ENCODE measurements at regions of chr11 and their contacts with region 1.

Region 1: GRCh38 chr11:12841946-12842630 is 167.0 kb upstream of the RASSF10 start:
- DNase-seq: peak in 3 of 4 experiments; percentile 32 to 75 (median 43)
- ATAC-seq: peak; percentile 55
- H3K4me3 ChIP-seq: no peak overlapping the region
- H3K27ac ChIP-seq: peak overlapping the region; percentile 76; the same call in 2 of the 3 replicates
- H3K4me1 ChIP-seq: peaks cover 10 to 63% of the 10 kb centered on the region in 2 experiments; a peak in 4 of 5 replicates
- H3K27me3 ChIP-seq: no peaks in the 10 kb centered on the region
- CTCF ChIP-seq: no peak
- EP300 ChIP-seq: 0 out of 2 replicates have a peak, but pooled peaks have one; percentile 32
- POLR2A ChIP-seq: no peak
- RAD21 ChIP-seq: 0 out of 4 replicates have a peak, but pooled peaks of 1 of the 2 experiments have one; percentile 8

Region 2: GRCh38 chr11:12827929-12828812 is 13.9 kb before region 1 on chr11:
- CTCF ChIA-PET with region 1: no interaction called
- POLR2A ChIA-PET with region 1: interaction called, 21 read pairs
- in situ Hi-C with region 1: no loop called
- intact Hi-C with region 1: loop called (anchors 2 kb)
- DNase-seq: peak in 2 of 4 experiments; percentile 67 to 68
- ATAC-seq: peak; percentile 87
- H3K4me3 ChIP-seq: peak overlapping the region; percentile 18
- H3K27ac ChIP-seq: peak overlapping the region; percentile 57
- H3K4me1 ChIP-seq: peaks cover 9 to 35% of the 10 kb centered on the region in 2 experiments; a peak in 4 of 5 replicates
- H3K27me3 ChIP-seq: no peaks in the 10 kb centered on the region
- CTCF ChIP-seq: peak in 2 of 3 experiments; percentile 15 to 18; a peak in 3 of 6 replicates
- EP300 ChIP-seq: no peak
- POLR2A ChIP-seq: 0 out of 2 replicates have a peak, but pooled peaks have one; percentile 34
- RAD21 ChIP-seq: peak; percentile 23 to 26; a peak in 3 of 4 replicates

Region 3: DNA sequence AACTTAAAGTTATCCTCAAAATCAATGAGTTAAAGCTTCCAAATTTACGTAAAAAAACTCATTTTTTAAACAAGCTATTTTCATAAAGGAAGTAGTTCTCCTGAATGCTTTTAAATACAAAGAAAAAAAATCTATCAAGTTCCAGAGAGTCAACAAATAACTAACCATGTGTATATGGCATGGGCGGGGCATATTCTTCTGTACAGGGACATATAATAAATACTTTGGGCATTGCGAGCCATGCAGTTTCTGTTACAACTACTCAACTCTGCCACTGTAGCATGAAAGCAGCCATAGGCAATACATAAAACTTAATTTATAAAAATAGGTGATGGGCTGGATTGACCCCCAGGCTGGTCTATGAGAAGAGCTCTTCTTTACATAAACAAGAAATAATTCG is 563.1 kb after region 1 on chr11:
- CTCF ChIA-PET with region 1: no interaction called
- POLR2A ChIA-PET with region 1: no interaction called
- in situ Hi-C with region 1: no loop called
- intact Hi-C with region 1: no loop called
- DNase-seq: no peak
- ATAC-seq: no peak
- H3K4me3 ChIP-seq: no peak overlapping the region
- H3K27ac ChIP-seq: no peak overlapping the region
- H3K4me1 ChIP-seq: no peaks in the 10 kb centered on the region
- H3K27me3 ChIP-seq: no peaks in the 10 kb centered on the region
- CTCF ChIP-seq: no peak
- EP300 ChIP-seq: no peak
- POLR2A ChIP-seq: no peak
- RAD21 ChIP-seq: no peak

Measured in K562 (cell line).